Activated CD4-positive, alpha-beta T cell treated with anti-CD3 and anti-CD28 coated beads, Interleukin-2, amount 10 ng/mL, durations not matched to agents 24 days and 14 days (primary cell): ENCODE measurements at regions of chr12 and their contacts with region 1.

Region 1: DNA sequence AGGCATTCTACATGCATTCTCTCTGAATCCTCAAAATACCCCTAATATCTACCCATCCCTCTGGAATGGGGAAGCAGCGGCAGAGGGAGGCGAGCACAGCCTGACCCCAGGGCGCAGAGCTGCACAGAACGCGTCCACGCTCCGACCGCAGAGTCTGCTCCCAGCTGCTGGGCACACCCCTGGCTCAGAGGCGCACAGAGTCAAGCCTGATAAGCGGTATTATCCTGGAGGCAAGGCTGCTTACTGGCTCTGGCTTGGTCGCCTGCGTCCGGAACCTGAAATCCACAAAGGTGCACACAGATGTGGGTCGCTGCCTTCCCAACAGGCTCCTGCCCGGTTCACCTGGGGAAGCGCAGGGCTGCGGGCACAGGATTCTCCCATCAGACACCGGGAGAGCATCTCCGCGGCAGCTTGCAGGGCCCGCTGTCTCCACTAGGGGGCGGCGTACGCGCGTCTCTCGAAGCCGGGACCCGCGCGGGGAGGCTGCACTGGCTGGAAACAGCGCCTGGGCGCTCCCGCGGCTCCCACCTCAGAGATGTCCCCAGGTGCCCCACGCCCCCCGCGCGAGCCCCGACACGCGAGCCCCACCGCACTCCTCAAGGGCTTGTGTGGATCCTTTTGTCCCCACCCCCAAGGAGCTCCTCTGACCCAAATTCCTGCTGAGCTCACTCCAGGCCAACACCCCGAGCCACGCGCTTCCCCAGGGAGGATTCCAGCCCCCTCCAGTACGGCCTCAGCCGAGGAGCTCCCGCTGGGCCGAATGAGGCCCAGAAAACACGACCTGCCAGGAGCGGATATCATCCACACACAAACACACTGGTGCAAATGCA is 120.1 kb upstream of the FZD10 start:
- DNase-seq: peak; percentile 79
- H3K4me3 Mint-ChIP-seq: no peak overlapping the region
- H3K27ac Mint-ChIP-seq: no peak overlapping the region
- H3K4me1 Mint-ChIP-seq: peaks cover under 1% of the 10 kb centered on the region
- H3K27me3 Mint-ChIP-seq: peaks cover 20% of the 10 kb centered on the region

Region 2: GRCh38 chr12:130070126-130070611 is 28.0 kb after region 1 on chr12:
- intact Hi-C with region 1: no loop called
- DNase-seq: no peak
- H3K4me3 Mint-ChIP-seq: no peak overlapping the region
- H3K27ac Mint-ChIP-seq: no peak overlapping the region
- H3K4me1 Mint-ChIP-seq: no peaks in the 10 kb centered on the region
- H3K27me3 Mint-ChIP-seq: no peaks in the 10 kb centered on the region

Region 3: GRCh38 chr12:130162267-130162666 is 120.1 kb after region 1 on chr12 and contains the start of gene FZD10:
- intact Hi-C with region 1: loop called (anchors 5 kb)
- DNase-seq: peak; percentile 57
- H3K4me3 Mint-ChIP-seq: peak within 1 kb of the TSS; percentile 56
- H3K27ac Mint-ChIP-seq: no peak within 1 kb of the TSS
- H3K4me1 Mint-ChIP-seq: peaks cover 4% of the 10 kb centered on the region
- H3K27me3 Mint-ChIP-seq: peaks cover 39% of the 10 kb centered on the region
- total RNA-seq, gene FZD10: not detected in 2 replicates

Region 4: GRCh38 chr12:130335517-130336392 is 293.6 kb after region 1 on chr12:
- intact Hi-C with region 1: loop called (anchors 1 kb)
- DNase-seq: peak; percentile 79
- H3K4me3 Mint-ChIP-seq: no peak overlapping the region
- H3K27ac Mint-ChIP-seq: no peak overlapping the region
- H3K4me1 Mint-ChIP-seq: peaks cover 3% of the 10 kb centered on the region
- H3K27me3 Mint-ChIP-seq: peaks cover 13% of the 10 kb centered on the region

Region 5: GRCh38 chr12:130747867-130748740 is 705.9 kb after region 1 on chr12:
- intact Hi-C with region 1: loop called (anchors 5 kb)
- DNase-seq: peak; percentile 91
- H3K4me3 Mint-ChIP-seq: no peak overlapping the region
- H3K27ac Mint-ChIP-seq: no peak overlapping the region
- H3K4me1 Mint-ChIP-seq: peaks cover 5% of the 10 kb centered on the region
- H3K27me3 Mint-ChIP-seq: peaks cover 9% of the 10 kb centered on the region